Mammary epithelial cell (primary cell): ENCODE measurements at regions of chr2 and their contacts with region 1.

Region 1: DNA sequence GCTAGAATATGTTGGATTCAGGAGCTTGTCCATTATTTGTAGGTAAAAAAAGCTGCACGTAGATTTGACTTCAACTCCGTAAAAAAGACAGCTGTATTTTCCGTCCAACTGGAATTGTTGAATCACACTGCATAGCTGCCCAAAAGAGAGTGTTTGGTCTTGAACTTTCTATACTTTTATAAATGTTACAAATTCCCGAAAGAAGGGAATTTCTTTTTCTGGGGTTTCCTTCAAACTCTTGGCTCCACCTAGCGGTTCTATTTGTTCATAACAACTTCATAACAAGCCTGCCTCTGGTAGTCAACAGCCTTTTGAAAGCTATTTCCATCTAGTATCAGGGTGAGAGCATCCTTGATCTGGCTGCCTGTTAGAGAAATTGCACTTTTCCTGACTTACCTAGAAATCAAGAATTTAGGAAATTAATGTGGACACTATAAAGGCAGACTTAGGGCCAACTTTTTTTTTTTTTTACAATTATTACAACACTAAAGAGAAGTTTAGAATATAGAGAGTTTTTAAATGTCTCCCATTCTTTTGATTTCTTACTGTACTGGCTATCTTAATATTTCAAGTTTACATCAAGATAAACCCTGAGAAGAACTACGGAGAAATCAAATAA is 48.1 kb downstream of the TMEM185B start:
- DNase-seq: peak; percentile 47
- H3K4me3 ChIP-seq: no peak overlapping the region
- H3K27ac ChIP-seq: no peak overlapping the region
- H3K4me1 ChIP-seq: peaks cover 10% of the 10 kb centered on the region
- H3K27me3 ChIP-seq: no peaks in the 10 kb centered on the region
- CTCF ChIP-seq: peak; percentile 54 to 70

Region 2: GRCh38 chr2:119517433-119517832 is 657.6 kb before region 1 on chr2:
- CTCF ChIA-PET with region 1: no interaction called
- dilution Hi-C with region 1: no loop called
- in situ Hi-C with region 1: no loop called
- intact Hi-C with region 1: loop called (anchors 1 kb)
- DNase-seq: peak; percentile 27
- H3K4me3 ChIP-seq: no peak overlapping the region
- H3K27ac ChIP-seq: no peak overlapping the region
- H3K4me1 ChIP-seq: no peaks in the 10 kb centered on the region
- H3K27me3 ChIP-seq: peaks cover 4% of the 10 kb centered on the region
- CTCF ChIP-seq: peak; percentile 62 to 82

Region 3: GRCh38 chr2:119659601-119660342 is 515.3 kb before region 1 on chr2:
- CTCF ChIA-PET with region 1: no interaction called
- dilution Hi-C with region 1: no loop called
- in situ Hi-C with region 1: no loop called
- intact Hi-C with region 1: loop called (anchors 5 kb)
- DNase-seq: no peak
- H3K4me3 ChIP-seq: no peak overlapping the region
- H3K27ac ChIP-seq: no peak overlapping the region
- H3K4me1 ChIP-seq: no peaks in the 10 kb centered on the region
- H3K27me3 ChIP-seq: no peaks in the 10 kb centered on the region
- CTCF ChIP-seq: peak; percentile 89 to 96

Region 4: DNA sequence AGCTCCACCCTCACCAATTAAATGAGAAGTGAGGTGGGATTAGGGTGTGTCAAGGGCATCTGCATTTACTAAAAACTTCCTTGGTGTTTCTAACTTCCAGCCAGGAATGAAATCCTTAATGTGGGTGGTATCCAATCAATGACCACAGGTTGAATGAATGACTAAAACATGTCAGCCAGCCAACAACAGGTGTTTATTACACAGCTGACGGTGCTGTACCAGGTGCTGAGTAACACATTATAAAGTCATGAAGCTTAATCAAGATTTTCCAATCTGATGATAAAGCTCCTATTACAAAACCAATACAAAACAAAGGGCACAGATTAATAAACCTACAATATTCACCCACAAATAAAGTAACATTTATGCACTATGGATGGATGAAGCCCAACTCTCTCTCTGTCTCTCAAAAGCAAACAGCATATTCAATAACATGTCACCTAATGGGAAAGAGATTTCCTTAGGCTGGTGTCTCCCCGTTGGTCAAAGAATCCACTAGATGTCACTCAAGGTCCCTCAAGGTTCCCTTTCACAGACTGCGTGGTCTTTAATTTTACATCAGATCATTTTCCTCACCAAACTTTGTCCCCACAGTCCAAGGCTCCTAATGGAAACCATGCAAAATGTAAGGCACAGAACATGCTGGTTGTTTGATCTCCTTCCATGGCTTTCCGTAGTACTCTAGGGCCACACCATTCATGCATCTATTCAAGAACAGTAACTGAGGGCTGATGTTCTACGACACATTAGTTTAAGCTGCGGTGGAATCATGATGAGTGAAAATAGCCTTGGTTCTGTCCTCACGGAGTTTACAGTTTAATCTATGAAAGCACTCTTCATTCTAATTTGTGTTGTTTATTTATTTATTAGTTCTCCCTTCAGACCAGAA is 421.8 kb before region 1 on chr2:
- CTCF ChIA-PET with region 1: interaction called, 4 read pairs
- dilution Hi-C with region 1: no loop called
- in situ Hi-C with region 1: no loop called
- intact Hi-C with region 1: loop called (anchors 1 kb)
- DNase-seq: peak; percentile 32
- H3K4me3 ChIP-seq: no peak overlapping the region
- H3K27ac ChIP-seq: no peak overlapping the region
- H3K4me1 ChIP-seq: peaks cover 52% of the 10 kb centered on the region
- H3K27me3 ChIP-seq: no peaks in the 10 kb centered on the region
- CTCF ChIP-seq: peak; percentile 54 to 58

Region 5: GRCh38 chr2:119996148-119996547 is 178.9 kb before region 1 on chr2:
- CTCF ChIA-PET with region 1: no interaction called
- dilution Hi-C with region 1: no loop called
- in situ Hi-C with region 1: no loop called
- intact Hi-C with region 1: no loop called
- DNase-seq: no peak
- H3K4me3 ChIP-seq: no peak overlapping the region
- H3K27ac ChIP-seq: no peak overlapping the region
- H3K4me1 ChIP-seq: no peaks in the 10 kb centered on the region
- H3K27me3 ChIP-seq: no peaks in the 10 kb centered on the region
- CTCF ChIP-seq: no peak

Region 6: GRCh38 chr2:120012771-120013596 is 162.1 kb before region 1 on chr2 and contains the start of gene EPB41L5:
- CTCF ChIA-PET with region 1: no interaction called
- dilution Hi-C with region 1: no loop called
- in situ Hi-C with region 1: no loop called
- intact Hi-C with region 1: loop called (anchors 2 kb)
- DNase-seq: peak; percentile 94
- H3K4me3 ChIP-seq: peak within 1 kb of the TSS; percentile 67 to 96 (median 68)
- H3K27ac ChIP-seq: peak within 1 kb of the TSS; percentile 80
- H3K4me1 ChIP-seq: peaks cover 10% of the 10 kb centered on the region
- H3K27me3 ChIP-seq: no peaks in the 10 kb centered on the region
- CTCF ChIP-seq: peak in 1 of 2 donors; percentile 6
- total RNA-seq, gene EPB41L5: 16.5 to 18.8 TPM

Region 7: GRCh38 chr2:120134263-120134662 is 40.8 kb before region 1 on chr2:
- CTCF ChIA-PET with region 1: no interaction called
- dilution Hi-C with region 1: no loop called
- in situ Hi-C with region 1: no loop called
- intact Hi-C with region 1: no loop called
- DNase-seq: peak; percentile 96
- H3K4me3 ChIP-seq: no peak overlapping the region
- H3K27ac ChIP-seq: peak overlapping the region; percentile 19
- H3K4me1 ChIP-seq: peaks cover 17% of the 10 kb centered on the region
- H3K27me3 ChIP-seq: no peaks in the 10 kb centered on the region
- CTCF ChIP-seq: no peak

Region 8: GRCh38 chr2:120312861-120313694 is 138.0 kb after region 1 on chr2:
- CTCF ChIA-PET with region 1: interaction called, 5 read pairs
- dilution Hi-C with region 1: no loop called
- in situ Hi-C with region 1: no loop called
- intact Hi-C with region 1: loop called (anchors 1 kb)
- DNase-seq: peak; percentile 74
- H3K4me3 ChIP-seq: peak overlapping the region; percentile 41 to 45 (median 42)
- H3K27ac ChIP-seq: no peak overlapping the region
- H3K4me1 ChIP-seq: peaks cover 4% of the 10 kb centered on the region
- H3K27me3 ChIP-seq: no peaks in the 10 kb centered on the region
- CTCF ChIP-seq: peak; percentile 79 to 93